Activated T-helper 1 cell treated with anti-CD3 and anti-CD28 coated beads, Interleukin-12 subunit alpha, Interleukin-12 subunit beta, Interleukin-2, Interleukin-4 antibody, amounts not matched to agents 30 ng/mL and 10 ng/mL and 1 ng/mL, durations not matched to agents 14 hours and 24 hours and 36 hours (primary cell): ENCODE measurements at regions of chr19 and their contacts with region 1.

Region 1: GRCh38 chr19:18021121-18021755 is 13.3 kb downstream of the ARRDC2 start:
- DNase-seq: peak; percentile 50
- H3K4me3 Mint-ChIP-seq: peak overlapping the region; percentile 75
- H3K27ac Mint-ChIP-seq: peak overlapping the region; percentile 95
- H3K4me1 Mint-ChIP-seq: peaks cover 68% of the 10 kb centered on the region
- H3K27me3 Mint-ChIP-seq: no peaks in the 10 kb centered on the region

Region 2: GRCh38 chr19:18086590-18087138 is 65.4 kb after region 1 on chr19 and contains the start of gene IL12RB1:
- intact Hi-C with region 1: loop called (anchors 2 kb)
- DNase-seq: peak; percentile 75
- H3K4me3 Mint-ChIP-seq: peak within 1 kb of the TSS; percentile 97
- H3K27ac Mint-ChIP-seq: peak within 1 kb of the TSS; percentile 99
- H3K4me1 Mint-ChIP-seq: peaks cover 60% of the 10 kb centered on the region
- H3K27me3 Mint-ChIP-seq: no peaks in the 10 kb centered on the region
- total RNA-seq, gene IL12RB1: 44.5 and 47.5 TPM in 2 replicates